ENCODE measurements at regions of chr13 and their contacts with region 1.

Region 1: GRCh38 chr13:48505597-48506091 is 27.2 kb downstream of the RCBTB2 start:
- DNase-seq: peak; percentile 61
- H3K4me3 Mint-ChIP-seq: peak overlapping the region; percentile 39
- H3K27ac Mint-ChIP-seq: peak overlapping the region; percentile 68
- H3K4me1 Mint-ChIP-seq: peaks cover 55% of the 10 kb centered on the region
- H3K27me3 Mint-ChIP-seq: no peaks in the 10 kb centered on the region

Region 2: GRCh38 chr13:48532506-48533499 is 27.2 kb after region 1 on chr13 and contains the start of gene RCBTB2:
- CTCF ChIA-PET with region 1: interaction called, 4 read pairs
- POLR2A ChIA-PET with region 1: interaction called, 11 read pairs
- intact Hi-C with region 1: loop called (anchors 1 kb)
- DNase-seq: peak; percentile 99
- H3K4me3 Mint-ChIP-seq: peak within 1 kb of the TSS; percentile 92
- H3K27ac Mint-ChIP-seq: peak within 1 kb of the TSS; percentile 99
- H3K4me1 Mint-ChIP-seq: peaks cover 28% of the 10 kb centered on the region
- H3K27me3 Mint-ChIP-seq: no peaks in the 10 kb centered on the region
- total RNA-seq, gene RCBTB2: 1.5 to 1.8 TPM

Measured in activated CD4-positive, alpha-beta memory T cell treated with anti-CD3 and anti-CD28 coated beads for 36 hours (primary cell).